ENCODE measurements at regions of chr3 and their contacts with region 1.

Region 1: GRCh38 chr3:143514874-143515273 is 333.4 kb downstream of the SLC9A9 start:
- DNase-seq: no peak
- ATAC-seq: no peak
- H3K4me3 ChIP-seq: no peak overlapping the region
- H3K27ac ChIP-seq: no peak overlapping the region
- H3K4me1 ChIP-seq: no peaks in the 10 kb centered on the region
- H3K27me3 ChIP-seq: no peaks in the 10 kb centered on the region
- CTCF ChIP-seq: no peak

Region 2: GRCh38 chr3:143478115-143478693 is 36.7 kb before region 1 on chr3:
- intact Hi-C with region 1: loop called in 1 of 10 experiments (anchors 1 kb)
- DNase-seq: no peak
- ATAC-seq: no peak
- H3K4me3 ChIP-seq: no peak overlapping the region
- H3K27ac ChIP-seq: no peak overlapping the region
- H3K4me1 ChIP-seq: no peaks in the 10 kb centered on the region
- H3K27me3 ChIP-seq: no peaks in the 10 kb centered on the region
- CTCF ChIP-seq: no peak